Endothelial cell of umbilical vein (primary cell): ENCODE measurements at regions of chr5 and their contacts with region 1.

Region 1: GRCh38 chr5:96582343-96582742 is 79.8 kb upstream of the CAST start:
- DNase-seq: peak; percentile 64
- H3K4me3 ChIP-seq: no peak overlapping the region
- H3K27ac ChIP-seq: peak overlapping the region; percentile 86
- H3K4me1 ChIP-seq: peaks cover 67% of the 10 kb centered on the region
- H3K27me3 ChIP-seq: no peaks in the 10 kb centered on the region
- CTCF ChIP-seq: no peak
- POLR2A ChIP-seq: no peak

Region 2: DNA sequence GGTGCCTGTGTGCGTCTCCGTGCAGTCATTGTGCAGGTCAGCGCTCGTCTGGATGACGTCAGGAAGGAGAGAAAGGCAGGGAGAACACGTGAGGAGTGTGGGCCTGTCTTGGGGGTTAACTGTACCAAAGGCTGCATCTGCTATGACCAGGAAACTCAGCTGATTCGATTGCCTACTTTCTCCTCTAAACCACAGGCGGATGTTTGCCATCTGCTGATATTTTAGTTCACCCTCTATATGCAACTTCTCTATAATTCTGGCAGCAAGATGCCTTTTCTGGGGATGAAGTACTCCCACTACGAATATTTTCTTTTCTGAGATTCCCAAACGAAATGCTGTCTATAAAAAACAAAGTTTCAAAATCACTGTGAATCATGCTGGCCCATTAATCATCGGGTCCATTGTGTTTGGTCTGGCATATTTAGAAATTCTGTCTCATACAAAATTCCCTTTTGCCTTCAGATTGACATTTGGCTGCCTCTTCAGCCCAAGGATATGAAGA is 174.0 kb before region 1 on chr5:
- CTCF ChIA-PET with region 1: no interaction called
- POLR2A ChIA-PET with region 1: no interaction called
- dilution Hi-C with region 1: no loop called
- intact Hi-C with region 1: loop called (anchors 1 kb)
- DNase-seq: peak; percentile 89
- H3K4me3 ChIP-seq: no peak overlapping the region
- H3K27ac ChIP-seq: peak overlapping the region; percentile 84
- H3K4me1 ChIP-seq: peaks cover 33% of the 10 kb centered on the region
- H3K27me3 ChIP-seq: no peaks in the 10 kb centered on the region
- CTCF ChIP-seq: no peak
- POLR2A ChIP-seq: no peak

Region 3: DNA sequence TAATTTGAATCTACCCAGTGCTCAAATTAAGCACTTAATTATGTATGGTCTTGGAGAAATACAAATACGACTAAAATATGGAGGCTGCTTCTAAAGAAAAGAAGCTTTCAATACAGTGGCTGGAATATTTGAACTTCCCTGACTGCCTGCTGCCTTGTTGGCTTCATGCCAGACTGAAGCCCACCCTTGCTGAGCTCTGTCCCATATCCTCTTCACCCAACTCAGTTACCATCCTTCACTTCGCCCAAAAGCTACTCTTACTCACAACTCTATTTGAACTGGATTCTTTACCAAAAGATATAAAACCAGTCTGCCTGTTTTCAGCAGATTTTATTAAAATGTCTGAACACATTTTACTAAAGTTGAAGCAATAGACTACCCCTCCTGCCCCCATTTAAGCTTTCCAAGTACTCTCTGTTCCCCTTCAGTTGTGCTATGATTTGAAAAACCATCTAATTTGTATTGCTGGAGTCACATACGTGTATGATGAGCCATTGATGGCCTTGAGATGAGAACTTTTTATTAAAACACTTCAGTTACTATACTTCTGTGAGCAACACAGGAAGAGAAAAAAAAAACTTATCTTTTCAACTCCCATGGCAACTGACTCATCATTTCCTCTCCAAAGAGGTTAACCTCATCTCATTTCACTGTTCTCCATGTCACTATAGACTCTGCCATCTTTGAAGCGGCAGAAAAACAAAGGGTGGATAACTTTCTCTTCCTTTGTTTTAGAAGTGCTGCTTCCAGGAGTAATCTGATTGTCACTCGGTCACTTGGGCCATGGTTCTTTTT is 45.2 kb before region 1 on chr5:
- CTCF ChIA-PET with region 1: no interaction called
- POLR2A ChIA-PET with region 1: no interaction called
- dilution Hi-C with region 1: no loop called
- intact Hi-C with region 1: loop called (anchors 1 kb)
- DNase-seq: peak; percentile 87
- H3K4me3 ChIP-seq: no peak overlapping the region
- H3K27ac ChIP-seq: peak overlapping the region; percentile 100
- H3K4me1 ChIP-seq: peaks cover 37% of the 10 kb centered on the region
- H3K27me3 ChIP-seq: no peaks in the 10 kb centered on the region
- CTCF ChIP-seq: no peak
- POLR2A ChIP-seq: peak; percentile 37

Region 4: GRCh38 chr5:96595300-96596090 is 13.2 kb after region 1 on chr5:
- CTCF ChIA-PET with region 1: interaction called, 38 read pairs
- POLR2A ChIA-PET with region 1: interaction called, 4 read pairs
- dilution Hi-C with region 1: no loop called
- intact Hi-C with region 1: no loop called
- DNase-seq: peak; percentile 80
- H3K4me3 ChIP-seq: no peak overlapping the region
- H3K27ac ChIP-seq: peak overlapping the region; percentile 79
- H3K4me1 ChIP-seq: peaks cover 79% of the 10 kb centered on the region
- H3K27me3 ChIP-seq: no peaks in the 10 kb centered on the region
- CTCF ChIP-seq: peak; percentile 19 to 56
- POLR2A ChIP-seq: no peak

Region 5: GRCh38 chr5:96876292-96876850 is 294.0 kb after region 1 on chr5 and contains the start of gene ERAP2:
- CTCF ChIA-PET with region 1: no interaction called
- POLR2A ChIA-PET with region 1: no interaction called
- dilution Hi-C with region 1: no loop called
- intact Hi-C with region 1: no loop called
- DNase-seq: peak; percentile 85
- H3K4me3 ChIP-seq: peak within 1 kb of the TSS; percentile 51 to 98 (median 80)
- H3K27ac ChIP-seq: peak within 1 kb of the TSS; percentile 76
- H3K4me1 ChIP-seq: peaks cover 34% of the 10 kb centered on the region
- H3K27me3 ChIP-seq: no peaks in the 10 kb centered on the region
- CTCF ChIP-seq: no peak
- POLR2A ChIP-seq: peak; percentile 56
- total RNA-seq, gene ERAP2: 6.1 and 10.0 TPM in 2 replicates